ENCODE measurements at regions of chr3 and their contacts with region 1.

Region 1: GRCh38 chr3:133040696-133041523 is 2.7 kb downstream of the TMEM108 start:
- DNase-seq: peak; percentile 86
- ATAC-seq: peak; percentile 61
- H3K4me3 Mint-ChIP-seq: peak overlapping the region; percentile 41; the same call in 1 of the 2 replicates
- H3K27ac Mint-ChIP-seq: peak overlapping the region; percentile 86; the same call in 1 of the 2 replicates
- H3K4me1 Mint-ChIP-seq: peaks cover 27% of the 10 kb centered on the region
- H3K27me3 Mint-ChIP-seq: peaks cover 38% of the 10 kb centered on the region
- CTCF ChIP-seq: peak; percentile 63; the same call in 1 of the 2 replicates

Region 2: GRCh38 chr3:132730891-132731580 is 309.9 kb before region 1 on chr3:
- CTCF ChIA-PET with region 1: interaction called, 21 read pairs
- POLR2A ChIA-PET with region 1: no interaction called
- DNase-seq: no peak
- ATAC-seq: peak; percentile 94
- H3K4me3 Mint-ChIP-seq: no peak overlapping the region
- H3K27ac Mint-ChIP-seq: no peak overlapping the region
- H3K4me1 Mint-ChIP-seq: peaks cover 10% of the 10 kb centered on the region; the same call in 1 of the 2 replicates
- H3K27me3 Mint-ChIP-seq: no peaks in the 10 kb centered on the region
- CTCF ChIP-seq: no peak

Region 3: DNA sequence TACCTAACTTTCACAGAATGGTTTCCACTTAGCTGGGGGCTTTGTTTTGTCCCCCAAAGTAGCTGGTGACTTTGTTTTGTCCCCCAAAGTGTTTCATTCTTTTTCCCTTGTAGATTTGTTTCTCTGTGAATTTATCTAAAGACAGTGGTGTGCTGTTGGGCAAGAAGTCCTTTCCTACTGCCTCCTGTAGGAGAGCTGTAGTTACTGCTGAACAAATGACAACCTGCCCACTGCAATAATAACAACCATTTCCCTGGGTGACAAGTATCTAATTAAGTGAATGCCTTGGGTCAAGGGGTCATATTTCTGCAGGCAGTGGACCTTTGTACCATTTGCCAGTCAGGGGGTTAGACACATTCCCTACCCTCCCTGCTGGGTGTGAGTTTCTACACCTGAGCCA is 233.6 kb after region 1 on chr3:
- CTCF ChIA-PET with region 1: interaction called, 14 read pairs
- POLR2A ChIA-PET with region 1: no interaction called
- DNase-seq: no peak
- ATAC-seq: peak; percentile 74
- H3K4me3 Mint-ChIP-seq: no peak overlapping the region
- H3K27ac Mint-ChIP-seq: no peak overlapping the region
- H3K4me1 Mint-ChIP-seq: peaks cover 28% of the 10 kb centered on the region
- H3K27me3 Mint-ChIP-seq: no peaks in the 10 kb centered on the region
- CTCF ChIP-seq: no peak

Region 4: DNA sequence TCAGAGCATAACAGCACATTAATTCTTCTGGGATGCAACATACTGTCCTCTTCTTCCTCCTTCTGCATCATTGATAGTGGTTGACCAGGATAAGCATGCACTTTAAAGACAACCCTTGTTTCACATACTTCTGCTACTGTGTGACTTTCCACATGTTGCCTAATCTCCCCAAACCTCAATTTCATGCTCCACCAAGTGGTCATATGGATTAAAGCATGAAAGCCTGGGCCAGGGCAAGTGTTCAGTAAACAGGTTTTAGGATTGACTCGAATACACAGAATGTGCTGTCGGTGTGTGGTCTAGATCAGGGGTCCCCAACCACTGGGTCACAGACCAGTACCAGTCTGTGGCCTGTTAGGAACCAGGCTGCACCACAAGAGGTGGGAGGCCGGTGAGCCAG is 336.5 kb after region 1 on chr3:
- CTCF ChIA-PET with region 1: interaction called, 46 read pairs
- POLR2A ChIA-PET with region 1: interaction called, 3 read pairs
- DNase-seq: no peak
- ATAC-seq: peak; percentile 53
- H3K4me3 Mint-ChIP-seq: no peak overlapping the region
- H3K27ac Mint-ChIP-seq: no peak overlapping the region
- H3K4me1 Mint-ChIP-seq: peaks cover 26% of the 10 kb centered on the region
- H3K27me3 Mint-ChIP-seq: no peaks in the 10 kb centered on the region
- CTCF ChIP-seq: no peak

Region 5: DNA sequence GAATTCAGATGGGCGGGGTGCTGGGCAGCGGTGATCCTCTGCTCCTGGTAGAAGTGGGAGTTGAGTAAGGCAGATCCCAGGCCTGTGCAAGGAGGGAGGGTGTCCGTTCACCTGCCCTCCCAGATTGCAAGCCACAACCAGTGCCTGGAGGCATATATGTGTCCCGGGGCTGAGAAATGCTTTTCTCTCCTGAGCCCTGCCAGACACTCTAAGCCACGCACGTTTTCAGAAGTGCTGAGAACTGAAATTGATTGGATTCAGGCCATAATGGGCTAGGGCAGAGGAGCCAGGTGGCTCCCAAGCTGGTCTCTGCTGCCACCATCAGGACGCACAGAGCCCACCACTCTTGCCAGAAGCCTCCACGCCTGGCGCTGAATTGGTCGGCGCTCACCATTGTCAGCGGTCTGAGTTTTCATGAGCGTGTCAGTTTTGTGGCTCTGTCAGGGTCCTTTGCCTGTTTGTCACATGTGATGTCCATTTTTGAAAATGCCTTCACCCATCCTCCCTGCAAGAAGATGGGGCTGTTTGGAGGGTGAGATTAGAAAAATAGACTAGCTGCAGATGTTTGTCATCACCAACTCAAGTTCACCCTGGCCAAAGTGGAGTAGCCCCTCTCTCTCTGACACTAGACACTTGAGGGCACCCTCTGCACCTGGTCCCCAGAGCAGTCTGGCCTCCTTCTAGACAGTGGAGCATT is 343.6 kb after region 1 on chr3:
- CTCF ChIA-PET with region 1: interaction called, 46 read pairs
- POLR2A ChIA-PET with region 1: interaction called, 3 read pairs
- DNase-seq: peak; percentile 78
- ATAC-seq: peak; percentile 98
- H3K4me3 Mint-ChIP-seq: no peak overlapping the region
- H3K27ac Mint-ChIP-seq: no peak overlapping the region
- H3K4me1 Mint-ChIP-seq: peaks cover 19% of the 10 kb centered on the region
- H3K27me3 Mint-ChIP-seq: no peaks in the 10 kb centered on the region
- CTCF ChIP-seq: peak; percentile 60

Measured in WTC11 (cell line).